Activated T-helper 1 cell treated with anti-CD3 and anti-CD28 coated beads, Interleukin-12 subunit alpha, Interleukin-12 subunit beta, Interleukin-2, Interleukin-4 antibody, amounts not matched to agents 30 ng/mL and 10 ng/mL and 1 ng/mL, durations not matched to agents 14 hours and 24 hours and 36 hours (primary cell): ENCODE measurements at regions of chr1 and their contacts with region 1.

Region 1: DNA sequence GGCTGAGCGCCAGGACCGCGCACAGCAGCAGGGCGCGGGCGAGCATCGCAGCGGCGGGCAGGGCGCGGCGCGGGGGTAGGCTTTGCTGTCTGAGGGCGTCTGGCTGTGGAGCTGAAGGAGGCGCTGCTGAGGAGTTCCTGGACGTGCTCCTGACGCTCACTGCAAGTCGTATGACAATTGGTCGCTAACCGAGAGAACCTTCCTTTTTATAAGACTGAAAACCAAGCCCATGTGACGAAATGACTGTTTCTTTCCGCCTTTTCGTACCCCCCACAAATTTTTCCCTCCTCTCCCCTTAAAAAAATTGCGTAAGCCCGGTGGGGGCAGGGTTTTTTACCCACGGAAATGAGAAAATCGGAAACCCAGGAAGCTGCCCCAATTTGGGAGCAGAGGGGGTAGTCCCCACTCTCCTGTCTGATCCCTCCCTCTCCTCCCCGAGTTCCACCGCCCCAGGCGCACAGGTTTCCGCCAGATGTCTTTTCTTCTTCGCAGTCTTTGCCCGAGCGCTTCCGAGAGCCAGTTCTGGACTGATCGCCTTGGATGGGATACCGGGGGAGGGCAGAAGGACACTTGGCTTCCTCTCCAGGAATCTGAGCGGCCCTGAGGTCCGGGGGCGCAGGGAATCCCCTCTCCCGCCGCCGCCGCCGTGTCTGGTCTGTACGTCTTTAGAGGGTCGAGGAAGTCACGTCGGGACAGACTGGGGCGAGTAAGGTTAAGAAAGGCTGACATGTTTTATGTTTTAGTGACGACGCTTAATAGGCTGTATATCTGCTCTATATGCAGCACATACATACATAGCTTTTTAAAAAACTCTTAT is at the start of gene PTGS2:
- DNase-seq: peak; percentile 21
- H3K4me3 Mint-ChIP-seq: peak within 1 kb of the TSS; percentile 72
- H3K27ac Mint-ChIP-seq: no peak within 1 kb of the TSS
- H3K4me1 Mint-ChIP-seq: peaks cover 13% of the 10 kb centered on the region
- H3K27me3 Mint-ChIP-seq: peaks cover 56% of the 10 kb centered on the region
- total RNA-seq, gene PTGS2: 0.67 and 0.71 TPM in 2 replicates

Region 2: GRCh38 chr1:186474208-186474607 is 206.2 kb before region 1 on chr1:
- intact Hi-C with region 1: no loop called
- DNase-seq: no peak
- H3K4me3 Mint-ChIP-seq: no peak overlapping the region
- H3K27ac Mint-ChIP-seq: no peak overlapping the region
- H3K4me1 Mint-ChIP-seq: no peaks in the 10 kb centered on the region
- H3K27me3 Mint-ChIP-seq: peaks cover 2% of the 10 kb centered on the region

Region 3: DNA sequence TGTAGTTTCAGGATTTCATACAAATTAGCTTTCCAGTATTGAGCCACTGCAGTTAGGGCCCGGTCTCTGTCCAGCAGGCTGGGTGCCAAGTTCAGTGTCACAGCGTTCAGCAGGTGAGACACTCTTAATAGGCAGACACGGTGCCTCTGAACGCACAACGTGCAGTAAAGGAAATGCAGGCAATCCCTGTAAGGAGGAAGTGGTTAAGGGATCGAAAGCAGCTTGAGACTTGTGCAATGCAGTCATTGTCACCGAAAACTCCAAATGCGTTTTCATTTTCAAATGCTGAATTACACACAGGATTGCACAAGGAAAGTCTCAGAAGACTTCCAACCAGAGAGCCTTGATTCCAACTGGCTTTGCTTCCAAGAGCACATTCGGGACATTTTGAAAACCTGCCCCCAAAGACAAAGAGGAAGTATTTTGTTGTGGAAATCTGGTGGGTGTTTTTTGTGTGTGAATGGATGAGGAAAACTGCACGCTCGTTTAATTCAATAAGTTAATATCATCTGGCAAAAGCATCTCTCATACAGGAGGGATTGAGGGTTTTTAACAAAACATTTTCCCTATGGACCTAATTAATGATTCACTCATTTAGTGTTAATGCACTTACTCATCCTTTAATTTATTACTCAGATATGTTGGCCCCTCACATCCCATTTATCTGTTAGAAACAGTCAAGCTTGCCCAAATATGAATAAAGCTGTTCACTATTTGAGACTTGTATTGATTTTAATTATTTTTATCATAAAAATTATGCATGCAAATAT is 61.9 kb before region 1 on chr1:
- intact Hi-C with region 1: loop called (anchors 2 kb)
- DNase-seq: peak; percentile 50
- H3K4me3 Mint-ChIP-seq: peak overlapping the region; percentile 72
- H3K27ac Mint-ChIP-seq: no peak overlapping the region
- H3K4me1 Mint-ChIP-seq: peaks cover 50% of the 10 kb centered on the region
- H3K27me3 Mint-ChIP-seq: peaks cover 32% of the 10 kb centered on the region